ENCODE measurements at regions of chr20 and their contacts with region 1.

Region 1: GRCh38 chr20:41617931-41618806 is at the start of gene CHD6:
- DNase-seq: peak; percentile 100
- H3K4me3 Mint-ChIP-seq: peak within 1 kb of the TSS; percentile 87
- H3K27ac Mint-ChIP-seq: peak within 1 kb of the TSS; percentile 77
- H3K4me1 Mint-ChIP-seq: peaks cover 25% of the 10 kb centered on the region
- H3K27me3 Mint-ChIP-seq: no peaks in the 10 kb centered on the region
- CTCF ChIP-seq: no peak
- total RNA-seq, gene CHD6: 27.1 and 27.2 TPM in 2 replicates

Region 2: GRCh38 chr20:41275301-41275731 is 342.9 kb before region 1 on chr20:
- CTCF ChIA-PET with region 1: no interaction called
- POLR2A ChIA-PET with region 1: no interaction called
- intact Hi-C with region 1: no loop called
- DNase-seq: no peak
- H3K4me3 Mint-ChIP-seq: no peak overlapping the region
- H3K27ac Mint-ChIP-seq: no peak overlapping the region
- H3K4me1 Mint-ChIP-seq: peaks cover 18% of the 10 kb centered on the region
- H3K27me3 Mint-ChIP-seq: no peaks in the 10 kb centered on the region
- CTCF ChIP-seq: no peak

Region 3: GRCh38 chr20:41524980-41525613 is 93.1 kb before region 1 on chr20:
- CTCF ChIA-PET with region 1: no interaction called
- POLR2A ChIA-PET with region 1: interaction called, 4 read pairs
- intact Hi-C with region 1: loop called (anchors 10 kb)
- DNase-seq: peak; percentile 58
- H3K4me3 Mint-ChIP-seq: no peak overlapping the region
- H3K27ac Mint-ChIP-seq: peak overlapping the region; percentile 43
- H3K4me1 Mint-ChIP-seq: peaks cover 13% of the 10 kb centered on the region
- H3K27me3 Mint-ChIP-seq: no peaks in the 10 kb centered on the region
- CTCF ChIP-seq: no peak

Region 4: GRCh38 chr20:41639630-41640029 is 21.5 kb after region 1 on chr20:
- CTCF ChIA-PET with region 1: interaction called, 8 read pairs
- POLR2A ChIA-PET with region 1: interaction called, 13 read pairs
- intact Hi-C with region 1: no loop called
- DNase-seq: no peak
- H3K4me3 Mint-ChIP-seq: no peak overlapping the region
- H3K27ac Mint-ChIP-seq: no peak overlapping the region
- H3K4me1 Mint-ChIP-seq: peaks cover 4% of the 10 kb centered on the region
- H3K27me3 Mint-ChIP-seq: peaks cover 19% of the 10 kb centered on the region
- CTCF ChIP-seq: no peak

Region 5: GRCh38 chr20:41645372-41645771 is 27.2 kb after region 1 on chr20:
- CTCF ChIA-PET with region 1: interaction called, 8 read pairs
- POLR2A ChIA-PET with region 1: interaction called, 13 read pairs
- intact Hi-C with region 1: no loop called
- DNase-seq: peak; percentile 61
- H3K4me3 Mint-ChIP-seq: no peak overlapping the region
- H3K27ac Mint-ChIP-seq: no peak overlapping the region
- H3K4me1 Mint-ChIP-seq: peaks cover 16% of the 10 kb centered on the region
- H3K27me3 Mint-ChIP-seq: peaks cover 17% of the 10 kb centered on the region
- CTCF ChIP-seq: no peak

Region 6: DNA sequence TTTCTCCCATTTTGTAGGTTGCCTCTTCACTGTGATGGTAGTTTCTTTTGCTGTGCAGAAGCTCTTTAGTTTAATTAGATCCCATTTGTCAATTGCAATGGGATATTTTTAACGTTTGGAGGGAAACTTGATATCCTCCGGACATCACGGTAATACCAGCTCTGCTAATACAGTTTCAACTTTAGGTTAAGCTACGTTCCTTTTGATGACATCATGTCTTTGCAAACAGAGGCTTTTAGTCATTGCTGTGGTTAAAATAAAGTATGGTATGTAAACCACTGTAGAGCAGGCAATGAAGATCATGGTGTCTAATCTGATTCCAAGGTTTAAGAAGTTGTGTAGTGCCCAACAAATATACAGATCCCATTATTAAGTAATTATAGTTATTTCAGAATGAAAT is 168.0 kb after region 1 on chr20:
- CTCF ChIA-PET with region 1: no interaction called
- POLR2A ChIA-PET with region 1: no interaction called
- intact Hi-C with region 1: no loop called
- DNase-seq: no peak
- H3K4me3 Mint-ChIP-seq: no peak overlapping the region
- H3K27ac Mint-ChIP-seq: no peak overlapping the region
- H3K4me1 Mint-ChIP-seq: no peaks in the 10 kb centered on the region
- H3K27me3 Mint-ChIP-seq: no peaks in the 10 kb centered on the region
- CTCF ChIP-seq: no peak

Region 7: GRCh38 chr20:41877911-41878310 is 259.7 kb after region 1 on chr20:
- CTCF ChIA-PET with region 1: no interaction called
- POLR2A ChIA-PET with region 1: no interaction called
- intact Hi-C with region 1: no loop called
- DNase-seq: no peak
- H3K4me3 Mint-ChIP-seq: no peak overlapping the region
- H3K27ac Mint-ChIP-seq: no peak overlapping the region
- H3K4me1 Mint-ChIP-seq: no peaks in the 10 kb centered on the region
- H3K27me3 Mint-ChIP-seq: no peaks in the 10 kb centered on the region
- CTCF ChIP-seq: no peak

Measured in MCF 10A (cell line).